ENCODE measurements at regions of chr13 and their contacts with region 1.

Region 1: GRCh38 chr13:29508130-29508875 is 87.2 kb downstream of the SLC7A1 start:
- DNase-seq: no peak
- H3K4me3 ChIP-seq: no peak overlapping the region
- H3K27me3 ChIP-seq: no peaks in the 10 kb centered on the region
- CTCF ChIP-seq: peak; percentile 97

Region 2: DNA sequence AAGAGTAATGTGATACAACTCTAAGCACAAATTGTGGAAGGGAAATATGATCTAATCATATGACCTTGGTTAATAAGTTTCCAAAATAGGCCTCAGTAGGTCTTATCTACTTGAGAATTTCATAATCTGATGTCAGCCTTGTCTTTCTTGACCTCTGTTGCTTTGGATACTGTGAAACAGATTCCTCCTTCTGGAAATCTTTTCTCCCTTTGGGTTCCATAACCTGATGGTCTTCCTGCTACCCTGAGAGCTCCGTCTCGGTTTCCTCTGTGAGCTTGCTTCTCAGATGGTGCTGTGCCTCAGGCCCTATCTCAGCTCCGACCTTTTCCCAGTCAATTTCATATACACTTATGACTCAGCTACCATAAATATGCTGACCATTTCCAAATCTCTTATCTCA is 783.3 kb before region 1 on chr13:
- CTCF ChIA-PET with region 1: no interaction called
- POLR2A ChIA-PET with region 1: no interaction called
- DNase-seq: no peak
- H3K4me3 ChIP-seq: no peak overlapping the region
- H3K27me3 ChIP-seq: no peaks in the 10 kb centered on the region
- CTCF ChIP-seq: no peak

Region 3: GRCh38 chr13:29522044-29522685 is 13.9 kb after region 1 on chr13:
- CTCF ChIA-PET with region 1: interaction called, 23 read pairs
- POLR2A ChIA-PET with region 1: no interaction called
- DNase-seq: peak; percentile 86
- H3K4me3 ChIP-seq: no peak overlapping the region
- H3K27me3 ChIP-seq: no peaks in the 10 kb centered on the region
- CTCF ChIP-seq: 0 out of 2 replicates have a peak, but pooled peaks have one; percentile 7

Region 4: GRCh38 chr13:29573190-29573589 is 64.9 kb after region 1 on chr13:
- CTCF ChIA-PET with region 1: interaction called, 11 read pairs
- POLR2A ChIA-PET with region 1: no interaction called
- DNase-seq: no peak
- H3K4me3 ChIP-seq: no peak overlapping the region
- H3K27me3 ChIP-seq: no peaks in the 10 kb centered on the region
- CTCF ChIP-seq: no peak

Region 5: GRCh38 chr13:29595380-29596063 is 87.2 kb after region 1 on chr13 and contains the start of gene SLC7A1:
- CTCF ChIA-PET with region 1: interaction called, 10 read pairs
- POLR2A ChIA-PET with region 1: no interaction called
- DNase-seq: no peak
- H3K4me3 ChIP-seq: peak within 1 kb of the TSS; percentile 92
- H3K27me3 ChIP-seq: no peaks in the 10 kb centered on the region
- CTCF ChIP-seq: 0 out of 2 replicates have a peak, but pooled peaks have one; percentile 11
- polyA plus RNA-seq, gene SLC7A1: 17.8 and 43.2 TPM in 2 replicates

Region 6: DNA sequence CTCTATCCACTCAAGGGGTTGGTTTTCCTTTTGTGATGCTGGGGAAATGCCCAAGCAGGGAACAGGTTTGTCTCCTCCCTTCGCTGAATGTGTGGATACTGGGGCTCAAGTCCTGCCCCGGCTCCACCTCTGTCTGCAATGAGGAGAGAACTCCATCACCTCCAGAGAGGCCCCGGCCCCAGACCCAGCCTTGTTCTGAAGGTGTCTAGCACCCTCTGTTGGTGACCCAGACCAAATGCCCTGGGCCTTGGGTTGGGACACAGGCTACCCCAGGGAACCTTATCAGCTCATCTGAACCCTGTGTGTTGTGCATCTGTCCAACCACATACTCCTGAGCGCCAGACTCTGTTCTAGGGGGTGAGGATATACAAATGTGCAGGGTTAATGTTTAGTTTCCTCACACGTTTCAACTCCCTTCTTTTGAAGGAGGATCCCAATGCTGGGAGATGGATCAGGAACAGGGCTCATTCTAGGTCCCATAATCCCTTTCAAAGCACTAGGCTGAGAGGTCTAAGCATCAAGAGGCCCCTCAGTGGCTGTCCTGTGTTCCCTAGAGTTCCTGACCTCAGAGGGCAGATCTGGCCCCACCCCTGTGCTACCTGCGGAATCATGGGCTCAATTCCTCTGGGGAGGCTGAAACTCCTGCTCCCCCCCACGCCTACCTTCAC is 199.7 kb after region 1 on chr13:
- CTCF ChIA-PET with region 1: interaction called, 173 read pairs
- POLR2A ChIA-PET with region 1: no interaction called
- DNase-seq: no peak
- H3K4me3 ChIP-seq: no peak overlapping the region
- H3K27me3 ChIP-seq: no peaks in the 10 kb centered on the region
- CTCF ChIP-seq: peak; percentile 83

Region 7: DNA sequence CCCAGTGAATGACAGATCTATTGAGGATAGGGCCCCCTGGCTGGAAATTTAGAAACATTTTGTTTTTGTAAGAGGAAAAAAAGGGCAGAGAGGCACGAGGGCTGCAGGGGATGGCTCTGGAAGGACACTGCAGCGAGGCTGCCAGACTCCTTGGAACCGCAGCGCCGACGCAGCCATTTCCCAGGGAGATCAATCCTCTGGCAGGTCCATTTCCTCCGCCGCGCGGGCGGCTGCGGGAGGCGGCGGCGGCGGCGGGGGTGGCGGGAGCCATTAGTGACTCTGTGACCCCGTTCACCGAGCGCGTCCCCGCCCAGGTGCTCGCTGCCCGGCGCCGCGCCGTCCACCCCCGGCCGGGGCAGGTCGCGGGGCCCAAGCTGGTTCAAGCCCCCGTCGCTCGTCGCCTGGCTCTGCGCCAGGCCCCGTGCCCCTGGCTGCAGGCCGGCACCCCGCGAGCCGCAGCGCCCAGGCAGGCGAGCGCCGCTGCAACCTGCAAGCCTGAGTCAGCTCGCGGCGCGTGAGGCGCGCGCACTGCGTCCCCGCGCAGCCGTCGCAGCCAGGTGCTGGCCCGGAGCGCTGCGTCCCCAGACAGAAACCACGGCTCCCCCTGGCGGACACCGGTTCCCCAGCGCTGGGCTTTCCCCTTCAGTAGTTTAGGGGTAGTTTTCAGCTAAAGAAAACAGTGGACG is 606.4 kb after region 1 on chr13:
- CTCF ChIA-PET with region 1: interaction called, 15 read pairs
- POLR2A ChIA-PET with region 1: no interaction called
- DNase-seq: no peak
- H3K4me3 ChIP-seq: peak overlapping the region; percentile 43
- H3K27me3 ChIP-seq: no peaks in the 10 kb centered on the region
- CTCF ChIP-seq: peak; percentile 90

Measured in BJ (cell line).